ENCODE measurements at regions of chr15 and their contacts with region 1.

Region 1: GRCh38 chr15:68586274-68586961 is 7.6 kb downstream of the CORO2B start:
- DNase-seq: no peak
- ATAC-seq: peak in 2 of 8 donors; percentile 34 to 41
- H3K4me3 ChIP-seq: no peak overlapping the region
- H3K27ac ChIP-seq: peak overlapping the region in 6 of 10 donors; percentile 22 to 72 (median 52)
- H3K4me1 ChIP-seq: peaks cover 8 to 84% (median 44%) of the 10 kb centered on the region in 9 donors
- H3K27me3 ChIP-seq: no peaks in the 10 kb centered on the region
- CTCF ChIP-seq: no peak

Region 2: GRCh38 chr15:68259883-68260282 is 326.5 kb before region 1 on chr15:
- intact Hi-C with region 1: no loop called
- DNase-seq: no peak
- ATAC-seq: peak in 5 of 8 donors; percentile 27 to 72 (median 46)
- H3K4me3 ChIP-seq: no peak overlapping the region
- H3K27ac ChIP-seq: peak overlapping the region in 4 of 10 donors; percentile 0 to 57 (median 34)
- H3K4me1 ChIP-seq: peaks cover 0 to 25% (median 15%) of the 10 kb centered on the region in 9 donors
- H3K27me3 ChIP-seq: peaks cover 0 to 20% (median 0%) of the 10 kb centered on the region in 7 donors
- CTCF ChIP-seq: no peak

Region 3: DNA sequence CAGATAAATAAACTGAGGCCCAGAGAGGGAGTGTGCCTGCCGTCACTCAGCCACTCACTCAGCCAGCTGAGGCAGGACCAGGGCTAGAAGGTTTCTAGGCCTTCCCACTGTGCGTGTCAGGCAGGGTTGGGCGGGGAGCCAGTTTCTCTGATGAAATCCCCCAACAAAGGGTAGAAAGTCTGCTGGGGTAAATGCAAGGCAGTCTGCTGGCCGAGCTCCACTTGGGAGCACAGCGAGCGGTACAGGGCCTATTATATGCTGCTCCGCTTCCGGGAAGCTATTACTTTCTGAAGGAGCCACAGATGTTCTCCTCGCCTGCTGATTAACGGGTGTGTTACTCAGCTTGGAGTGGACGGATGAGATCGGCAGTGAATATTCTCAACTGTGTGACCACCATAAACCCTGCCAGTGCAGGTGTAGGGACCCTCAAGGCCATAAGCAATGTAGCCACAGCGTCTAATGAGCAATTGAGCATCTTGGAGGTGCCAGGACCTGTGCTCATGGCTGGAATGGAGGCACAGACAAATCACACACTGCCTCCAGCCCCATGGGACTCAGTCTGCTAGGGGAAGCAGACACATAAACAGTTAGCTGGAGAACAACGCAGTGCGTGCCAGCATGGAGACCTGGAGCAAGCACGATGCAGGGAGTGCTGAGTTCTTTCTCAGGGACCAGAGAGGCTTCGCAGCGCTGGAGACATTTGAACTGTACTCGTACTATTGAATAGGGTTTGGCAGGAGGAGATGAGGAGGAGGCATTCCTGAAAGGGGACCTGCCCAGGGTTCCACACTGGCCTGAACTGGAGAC is 34.5 kb after region 1 on chr15:
- intact Hi-C with region 1: loop called in 2 of 10 experiments (anchors 5 kb)
- DNase-seq: peak; percentile 82 to 86
- ATAC-seq: peak; percentile 77 to 88 (median 84)
- H3K4me3 ChIP-seq: no peak overlapping the region
- H3K27ac ChIP-seq: peak overlapping the region in 9 of 10 donors; percentile 43 to 78 (median 65)
- H3K4me1 ChIP-seq: peaks cover 0 to 65% (median 29%) of the 10 kb centered on the region in 9 donors
- H3K27me3 ChIP-seq: no peaks in the 10 kb centered on the region
- CTCF ChIP-seq: no peak

Region 4: DNA sequence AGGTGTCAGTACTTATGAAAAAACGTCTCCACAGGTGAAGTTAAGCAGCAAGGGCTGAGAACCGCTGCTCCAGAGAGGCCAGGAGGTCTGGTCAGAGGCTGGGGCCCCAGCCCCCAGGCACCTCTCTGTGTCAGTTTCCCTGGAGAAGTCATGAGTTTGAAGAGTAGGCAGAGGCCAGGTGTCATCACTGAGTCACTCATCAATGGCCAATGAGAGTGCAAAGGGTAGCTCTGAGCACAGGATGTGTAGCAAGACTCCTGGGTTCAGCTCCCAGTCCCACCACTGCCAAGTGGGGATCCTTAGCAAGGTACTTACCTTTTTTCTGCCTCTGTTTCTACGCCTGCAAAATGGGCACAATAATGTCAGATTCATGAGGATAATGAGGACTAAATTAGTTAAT is 40.3 kb after region 1 on chr15:
- intact Hi-C with region 1: loop called in 2 of 10 experiments (anchors 5 kb)
- DNase-seq: no peak
- ATAC-seq: no peak
- H3K4me3 ChIP-seq: no peak overlapping the region
- H3K27ac ChIP-seq: no peak overlapping the region
- H3K4me1 ChIP-seq: peaks cover 0 to 38% (median 7%) of the 10 kb centered on the region in 9 donors
- H3K27me3 ChIP-seq: no peaks in the 10 kb centered on the region
- CTCF ChIP-seq: no peak

Region 5: GRCh38 chr15:68637767-68638404 is 51.5 kb after region 1 on chr15:
- intact Hi-C with region 1: loop called in 2 of 10 experiments (anchors 1 to 2 kb)
- DNase-seq: peak; percentile 56 to 80
- ATAC-seq: peak; percentile 58 to 85 (median 76)
- H3K4me3 ChIP-seq: no peak overlapping the region
- H3K27ac ChIP-seq: peak overlapping the region in 7 of 10 donors; percentile 5 to 66 (median 56)
- H3K4me1 ChIP-seq: peaks cover 19 to 88% (median 67%) of the 10 kb centered on the region in 9 donors
- H3K27me3 ChIP-seq: no peaks in the 10 kb centered on the region
- CTCF ChIP-seq: no peak

Measured in heart right ventricle (tissue), 16 donors.